Mucosa of descending colon (tissue), 3 donors: ENCODE measurements at regions of chr5 and their contacts with region 1.

Region 1: DNA sequence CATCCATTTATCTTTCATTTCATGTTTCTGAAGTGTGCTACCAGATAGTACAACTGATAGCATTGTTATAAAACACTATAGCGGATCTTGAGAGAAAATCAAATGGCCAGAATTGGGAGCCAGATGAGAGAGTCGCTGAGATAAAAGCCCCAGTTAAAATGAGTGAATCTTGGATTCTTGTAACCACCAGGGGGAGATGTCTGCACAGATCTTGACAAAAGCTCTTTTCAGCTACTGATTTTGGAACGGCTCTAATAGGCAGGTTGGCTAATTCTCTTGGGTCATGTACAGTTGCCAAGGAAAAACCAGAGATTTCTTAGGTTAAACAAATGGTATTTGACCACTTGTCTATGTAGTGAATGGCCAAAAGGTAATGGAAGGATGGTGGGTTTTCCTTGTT is 21.7 kb downstream of the F2RL2 start:
- DNase-seq: peak in 1 of 3 donors; percentile 62
- ATAC-seq: peak; percentile 62
- H3K4me3 ChIP-seq: no peak overlapping the region
- H3K4me1 ChIP-seq: peaks cover 7% of the 10 kb centered on the region
- CTCF ChIP-seq: peak; percentile 35

Region 2: GRCh38 chr5:76483433-76483832 is 118.0 kb before region 1 on chr5:
- intact Hi-C with region 1: no loop called
- DNase-seq: peak in 1 of 3 donors; percentile 16
- ATAC-seq: no peak
- H3K4me3 ChIP-seq: no peak overlapping the region
- H3K4me1 ChIP-seq: peaks cover 46% of the 10 kb centered on the region
- CTCF ChIP-seq: no peak

Region 3: DNA sequence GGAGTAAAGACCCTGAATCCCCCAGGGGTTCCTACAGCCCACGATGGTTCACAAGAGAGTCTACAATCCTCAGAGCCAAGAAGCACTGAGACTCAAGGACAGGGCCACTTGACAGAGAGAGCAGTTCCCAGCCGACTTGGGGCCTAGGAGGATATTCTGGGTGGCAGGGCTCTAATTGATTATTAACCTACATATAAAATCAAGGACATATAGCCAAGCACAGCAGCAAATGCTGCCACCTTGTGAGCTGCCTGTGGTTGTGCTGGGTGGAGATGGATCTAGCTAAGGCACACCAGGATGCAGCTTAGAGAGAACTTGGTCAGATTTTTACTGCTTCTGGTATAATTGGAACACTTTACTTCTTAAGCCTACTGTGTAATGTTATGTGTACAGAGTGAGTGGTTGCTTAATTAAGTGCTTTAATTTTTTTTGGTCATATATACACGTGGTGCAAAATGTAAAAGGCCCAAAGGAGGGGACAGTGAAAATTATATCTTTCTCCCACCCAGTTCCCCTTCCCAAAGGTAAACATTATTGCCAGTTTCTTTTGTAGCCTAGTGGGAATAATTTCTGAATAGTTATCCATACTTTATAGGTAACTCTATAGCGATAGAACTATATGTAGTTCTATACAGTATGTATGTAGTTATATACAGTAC is 57.1 kb before region 1 on chr5:
- intact Hi-C with region 1: no loop called
- DNase-seq: peak; percentile 71 to 79 (median 72)
- ATAC-seq: peak; percentile 79
- H3K4me3 ChIP-seq: no peak overlapping the region
- H3K4me1 ChIP-seq: peaks cover 45% of the 10 kb centered on the region
- CTCF ChIP-seq: peak; percentile 61

Region 4: GRCh38 chr5:76556511-76557221 is 44.8 kb before region 1 on chr5:
- intact Hi-C with region 1: no loop called
- DNase-seq: no peak
- ATAC-seq: peak; percentile 40
- H3K4me3 ChIP-seq: no peak overlapping the region
- H3K4me1 ChIP-seq: no peaks in the 10 kb centered on the region
- CTCF ChIP-seq: no peak

Region 5: DNA sequence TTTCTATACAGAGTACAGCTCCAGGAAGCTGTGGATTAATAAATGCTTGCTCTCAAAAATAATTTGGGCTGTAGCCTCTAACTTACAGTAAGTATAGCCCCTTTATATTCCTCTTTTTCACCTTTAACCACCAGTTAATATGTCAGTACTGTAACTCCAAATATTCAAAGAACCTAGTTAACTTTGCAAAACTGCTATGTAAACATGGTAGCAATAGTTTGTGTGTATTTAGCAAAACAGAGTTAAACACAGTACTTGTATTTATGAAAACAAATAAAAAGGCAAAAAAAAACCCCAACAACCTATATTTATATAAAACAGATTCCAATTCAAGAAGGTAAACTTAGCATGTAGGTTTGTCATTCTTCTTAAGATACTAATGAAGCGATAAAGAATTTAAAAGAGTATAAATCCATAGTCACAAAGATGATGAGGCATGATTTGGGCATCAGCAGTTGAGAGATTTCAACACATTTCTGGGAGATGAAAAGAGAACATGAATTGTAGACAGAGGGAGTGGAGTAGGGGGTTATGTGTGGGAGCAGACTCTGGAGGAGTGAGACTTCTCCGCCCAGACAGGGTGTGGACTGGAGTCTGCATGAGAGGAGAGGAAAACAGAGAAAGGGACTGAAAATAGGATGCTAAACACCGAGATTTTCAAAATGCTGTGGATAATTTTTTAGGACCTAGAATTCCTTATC is 170.4 kb after region 1 on chr5:
- intact Hi-C with region 1: loop called in 1 of 2 experiments (anchors 5 kb)
- DNase-seq: no peak
- ATAC-seq: no peak
- H3K4me3 ChIP-seq: no peak overlapping the region
- H3K4me1 ChIP-seq: no peaks in the 10 kb centered on the region
- CTCF ChIP-seq: no peak